SK-N-SH (cell line): ENCODE measurements at regions of chr2 and their contacts with region 1.

Region 1: DNA sequence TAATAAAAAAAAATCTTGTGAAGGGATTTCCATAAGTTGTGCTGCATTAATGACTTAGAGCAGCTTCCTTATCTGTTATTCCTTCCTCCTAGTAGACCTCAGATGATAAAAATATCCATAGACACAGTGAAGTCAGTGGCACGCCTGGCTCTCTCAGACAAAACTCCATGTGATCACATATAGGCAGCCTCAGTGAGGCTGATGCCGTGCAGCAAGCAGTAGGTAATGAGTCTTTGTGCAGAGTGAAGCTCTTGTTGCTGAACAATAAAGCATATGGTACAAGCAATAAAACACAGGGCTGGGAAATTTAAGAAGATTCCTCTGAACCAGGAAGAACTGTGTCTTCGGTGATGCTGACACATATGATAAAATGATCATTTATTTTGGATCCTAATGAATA is 102.7 kb downstream of the CSRNP3 start:
- DNase-seq: peak; percentile 35
- H3K4me3 ChIP-seq: peak overlapping the region; percentile 19 to 28; a peak in 3 of 4 replicates
- H3K27ac ChIP-seq: peak overlapping the region; percentile 51 to 95
- H3K4me1 ChIP-seq: peaks cover 12 to 17% of the 10 kb centered on the region in 2 experiments; a peak in 3 of 4 replicates
- H3K27me3 ChIP-seq: no peaks in the 10 kb centered on the region
- CTCF ChIP-seq: no peak
- EP300 ChIP-seq: peak in 1 of 2 experiments; percentile 37; a peak in 1 of 4 replicates
- RAD21 ChIP-seq: peak; percentile 42; the same call in 1 of the 2 replicates

Region 2: GRCh38 chr2:165113414-165113813 is 458.7 kb before region 1 on chr2:
- CTCF ChIA-PET with region 1: no interaction called
- POLR2A ChIA-PET with region 1: no interaction called
- DNase-seq: peak; percentile 30
- H3K4me3 ChIP-seq: no peak overlapping the region
- H3K27ac ChIP-seq: peak overlapping the region; percentile 67 to 94
- H3K4me1 ChIP-seq: peaks cover 10 to 29% of the 10 kb centered on the region in 2 experiments
- H3K27me3 ChIP-seq: no peaks in the 10 kb centered on the region
- CTCF ChIP-seq: no peak
- EP300 ChIP-seq: peak; percentile 44 to 82; a peak in 3 of 4 replicates
- RAD21 ChIP-seq: no peak

Region 3: DNA sequence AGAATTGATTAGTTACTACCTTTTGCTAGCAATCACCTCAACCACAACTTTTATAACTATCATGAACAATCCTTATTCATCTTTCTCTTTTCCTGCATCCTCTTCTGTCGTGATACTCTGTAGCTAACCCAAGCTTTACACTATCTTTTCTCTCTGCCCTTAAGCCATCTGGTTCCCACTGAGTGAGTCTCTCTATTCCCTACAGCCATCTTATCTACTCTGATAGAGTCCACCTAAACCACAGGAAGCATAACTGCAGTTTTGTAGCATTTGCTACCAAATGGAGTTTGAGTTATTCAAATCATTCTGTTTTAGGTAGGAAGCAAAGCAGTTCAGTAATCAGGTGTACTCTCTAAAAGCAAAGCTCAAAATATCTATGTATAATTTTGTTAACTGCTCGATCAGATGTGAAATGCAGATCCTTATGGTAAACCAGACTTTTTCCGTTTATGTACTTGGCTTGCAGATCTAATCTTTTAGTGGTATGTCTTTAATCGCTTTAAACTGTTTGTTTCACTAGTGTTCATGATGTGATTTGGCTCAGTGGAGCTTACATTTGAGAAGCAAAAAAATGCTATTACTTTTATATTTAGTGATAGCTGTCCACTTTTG is 11.7 kb before region 1 on chr2:
- CTCF ChIA-PET with region 1: interaction called, 12 read pairs
- POLR2A ChIA-PET with region 1: no interaction called
- DNase-seq: no peak
- H3K4me3 ChIP-seq: no peak overlapping the region
- H3K27ac ChIP-seq: peak overlapping the region in 1 of 2 experiments; percentile 74; a peak in 2 of 4 replicates
- H3K4me1 ChIP-seq: peaks cover 0 to 2% of the 10 kb centered on the region in 2 experiments; a peak in 2 of 4 replicates
- H3K27me3 ChIP-seq: no peaks in the 10 kb centered on the region
- CTCF ChIP-seq: no peak
- EP300 ChIP-seq: no peak
- RAD21 ChIP-seq: no peak

Region 4: DNA sequence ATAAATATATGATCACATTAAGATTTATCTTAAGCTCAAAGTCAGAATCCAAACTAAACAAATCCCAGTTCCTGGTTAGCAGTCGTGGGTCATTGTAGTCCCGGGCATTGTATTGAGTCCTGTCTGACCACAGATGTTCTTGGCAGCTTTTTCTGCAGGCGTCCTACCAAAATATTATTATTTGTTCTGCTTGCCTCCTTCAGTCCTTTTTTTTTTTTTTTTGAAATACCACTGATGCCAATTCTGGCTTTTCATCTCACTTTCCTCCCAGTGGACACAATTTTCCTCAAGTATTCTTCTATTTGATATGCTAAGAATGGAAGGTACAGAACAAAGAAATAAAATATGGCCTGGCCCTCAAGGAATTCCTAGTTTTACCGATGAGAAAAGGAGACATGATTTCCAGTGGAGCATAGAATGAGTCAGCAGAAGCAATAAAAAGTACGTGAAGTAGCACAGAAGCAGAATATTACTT is 49.0 kb after region 1 on chr2:
- CTCF ChIA-PET with region 1: no interaction called
- POLR2A ChIA-PET with region 1: no interaction called
- DNase-seq: no peak
- H3K4me3 ChIP-seq: no peak overlapping the region
- H3K27ac ChIP-seq: no peak overlapping the region; a peak in 1 of 4 replicates
- H3K4me1 ChIP-seq: peaks cover 0 to 7% of the 10 kb centered on the region in 2 experiments; a peak in 2 of 4 replicates
- H3K27me3 ChIP-seq: no peaks in the 10 kb centered on the region
- CTCF ChIP-seq: no peak
- EP300 ChIP-seq: no peak
- RAD21 ChIP-seq: no peak